Activated CD8-positive, alpha-beta memory T cell treated with anti-CD3 and anti-CD28 coated beads, Interleukin-2, amount 10 ng/mL, durations not matched to agents 7 days and 5 days (primary cell): ENCODE measurements at regions of chr16 and their contacts with region 1.

Region 1: GRCh38 chr16:87877938-87878507 is 8.7 kb upstream of the SLC7A5 start:
- DNase-seq: peak; percentile 68
- ATAC-seq: no peak
- H3K4me3 Mint-ChIP-seq: no peak overlapping the region
- H3K27ac Mint-ChIP-seq: no peak overlapping the region
- H3K4me1 Mint-ChIP-seq: peaks cover 28% of the 10 kb centered on the region
- H3K27me3 Mint-ChIP-seq: peaks cover 8% of the 10 kb centered on the region

Region 2: DNA sequence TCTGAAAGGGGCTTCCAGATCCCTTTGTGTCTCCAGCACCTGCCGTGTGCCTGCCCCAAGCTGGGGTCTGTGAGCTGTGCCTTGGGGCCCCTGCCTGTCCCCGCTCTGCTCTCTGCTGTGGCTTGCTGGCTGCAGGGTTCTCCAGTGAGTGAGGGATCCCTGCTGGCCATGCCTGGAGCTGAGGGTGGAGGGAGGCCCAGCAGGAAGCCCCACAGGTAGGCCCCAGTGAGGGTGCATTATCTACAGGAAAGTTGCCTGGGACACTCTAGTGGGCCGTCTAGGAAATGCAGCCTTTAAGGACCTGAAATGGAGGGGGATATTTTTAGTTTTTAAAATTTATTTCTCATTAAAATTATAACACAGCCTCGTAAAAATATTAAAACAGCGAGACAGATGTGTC is 224.8 kb before region 1 on chr16:
- CTCF ChIA-PET with region 1: no interaction called
- DNase-seq: no peak
- ATAC-seq: no peak
- H3K4me3 Mint-ChIP-seq: no peak overlapping the region
- H3K27ac Mint-ChIP-seq: no peak overlapping the region
- H3K4me1 Mint-ChIP-seq: peaks cover 3% of the 10 kb centered on the region
- H3K27me3 Mint-ChIP-seq: peaks cover 28% of the 10 kb centered on the region

Region 3: GRCh38 chr16:87765776-87766484 is 112.1 kb before region 1 on chr16 and contains the start of gene KLHDC4:
- CTCF ChIA-PET with region 1: interaction called, 15 read pairs
- DNase-seq: peak; percentile 94
- ATAC-seq: peak; percentile 83
- H3K4me3 Mint-ChIP-seq: peak within 1 kb of the TSS; percentile 100
- H3K27ac Mint-ChIP-seq: peak within 1 kb of the TSS; percentile 100
- H3K4me1 Mint-ChIP-seq: peaks cover 46% of the 10 kb centered on the region
- H3K27me3 Mint-ChIP-seq: no peaks in the 10 kb centered on the region
- total RNA-seq, gene KLHDC4: 86.0 to 114 TPM

Region 4: GRCh38 chr16:87853411-87854052 is 24.5 kb before region 1 on chr16:
- CTCF ChIA-PET with region 1: interaction called, 221 read pairs
- DNase-seq: peak; percentile 92
- ATAC-seq: peak; percentile 51
- H3K4me3 Mint-ChIP-seq: peak overlapping the region; percentile 30
- H3K27ac Mint-ChIP-seq: peak overlapping the region; percentile 87
- H3K4me1 Mint-ChIP-seq: peaks cover 62% of the 10 kb centered on the region
- H3K27me3 Mint-ChIP-seq: no peaks in the 10 kb centered on the region

Region 5: GRCh38 chr16:87860553-87861299 is 17.3 kb before region 1 on chr16:
- CTCF ChIA-PET with region 1: interaction called, 12 read pairs
- DNase-seq: peak; percentile 53
- ATAC-seq: peak; percentile 17
- H3K4me3 Mint-ChIP-seq: peak overlapping the region; percentile 30
- H3K27ac Mint-ChIP-seq: peak overlapping the region; percentile 79
- H3K4me1 Mint-ChIP-seq: peaks cover 86% of the 10 kb centered on the region
- H3K27me3 Mint-ChIP-seq: no peaks in the 10 kb centered on the region

Region 6: DNA sequence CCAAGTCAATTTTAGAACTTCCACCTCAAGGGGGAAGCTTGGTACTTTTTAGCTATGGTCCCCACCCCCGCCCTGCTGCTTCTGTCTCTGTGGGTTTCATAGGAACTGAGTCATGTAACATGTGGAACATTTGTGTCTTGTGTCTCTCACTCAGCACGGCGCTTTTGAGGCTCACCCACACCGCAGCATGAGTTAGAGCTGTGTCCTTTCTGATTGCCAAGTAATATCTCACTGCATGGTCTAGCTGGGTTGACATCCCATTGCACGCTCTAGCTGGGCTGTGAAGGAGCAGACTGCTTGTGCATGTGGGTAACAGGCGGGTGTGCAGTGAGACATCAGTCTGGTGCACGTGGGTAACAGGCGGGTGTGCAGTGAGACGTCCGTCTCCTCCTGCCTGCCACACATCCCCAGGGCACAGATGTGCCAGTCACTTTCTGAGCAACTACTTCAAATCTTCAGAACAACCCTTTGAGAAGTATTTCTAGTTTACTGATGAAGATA is 17.7 kb after region 1 on chr16:
- CTCF ChIA-PET with region 1: interaction called, 49 read pairs
- DNase-seq: peak; percentile 98
- ATAC-seq: peak; percentile 88
- H3K4me3 Mint-ChIP-seq: peak overlapping the region; percentile 40
- H3K27ac Mint-ChIP-seq: peak overlapping the region; percentile 98
- H3K4me1 Mint-ChIP-seq: peaks cover 48% of the 10 kb centered on the region
- H3K27me3 Mint-ChIP-seq: no peaks in the 10 kb centered on the region

Region 7: GRCh38 chr16:87914812-87915211 is 36.8 kb after region 1 on chr16:
- CTCF ChIA-PET with region 1: interaction called, 11 read pairs
- DNase-seq: no peak
- ATAC-seq: no peak
- H3K4me3 Mint-ChIP-seq: no peak overlapping the region
- H3K27ac Mint-ChIP-seq: no peak overlapping the region
- H3K4me1 Mint-ChIP-seq: peaks cover 4% of the 10 kb centered on the region
- H3K27me3 Mint-ChIP-seq: peaks cover 20% of the 10 kb centered on the region